ENCODE measurements at regions of chr2 and their contacts with region 1.

Region 1: DNA sequence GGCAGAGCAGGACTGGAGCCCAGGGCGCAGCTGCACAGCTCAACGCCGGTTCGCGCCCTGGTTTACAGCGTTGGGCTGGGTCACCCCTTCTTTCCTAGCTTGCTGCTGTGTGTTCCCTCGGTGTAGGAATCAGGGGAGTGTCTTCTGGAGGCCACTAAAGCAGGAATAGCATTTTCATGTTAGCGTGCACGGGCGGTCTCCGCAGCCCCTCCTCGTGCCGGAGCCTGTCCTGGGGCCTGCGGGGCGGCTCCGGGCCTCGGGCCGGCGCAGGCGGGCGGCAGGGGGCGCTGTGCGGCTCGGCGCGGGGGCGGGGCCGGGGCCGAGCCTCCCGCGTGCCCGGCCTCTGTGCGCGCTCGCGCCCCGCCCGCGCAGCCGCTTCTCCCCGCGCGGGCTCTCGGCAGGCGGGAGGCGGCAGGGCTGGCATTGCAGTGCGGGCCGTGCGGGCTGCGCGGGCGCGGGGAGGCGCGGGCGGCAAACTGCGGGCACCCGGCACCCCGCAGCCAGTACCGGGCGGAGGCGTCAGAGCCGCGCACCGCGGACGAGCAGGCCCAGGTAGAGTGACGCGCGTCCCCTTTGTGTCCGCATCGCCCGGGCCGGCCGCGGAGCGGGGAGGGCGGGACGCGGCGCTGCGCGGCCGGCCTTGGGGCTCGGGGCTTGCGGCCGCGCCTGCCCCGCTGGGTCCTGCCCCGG is at the start of gene RNF144A:
- DNase-seq: peak; percentile 69 to 89 (median 89)
- ATAC-seq: peak; percentile 85 to 89
- H3K4me3 ChIP-seq: peak within 1 kb of the TSS; percentile 69
- H3K27ac ChIP-seq: peak within 1 kb of the TSS; percentile 25
- H3K4me1 ChIP-seq: peaks cover 4% of the 10 kb centered on the region
- H3K27me3 ChIP-seq: no peaks in the 10 kb centered on the region
- total RNA-seq, gene RNF144A: 5.9 to 14.3 (median 10.5) TPM

Region 2: DNA sequence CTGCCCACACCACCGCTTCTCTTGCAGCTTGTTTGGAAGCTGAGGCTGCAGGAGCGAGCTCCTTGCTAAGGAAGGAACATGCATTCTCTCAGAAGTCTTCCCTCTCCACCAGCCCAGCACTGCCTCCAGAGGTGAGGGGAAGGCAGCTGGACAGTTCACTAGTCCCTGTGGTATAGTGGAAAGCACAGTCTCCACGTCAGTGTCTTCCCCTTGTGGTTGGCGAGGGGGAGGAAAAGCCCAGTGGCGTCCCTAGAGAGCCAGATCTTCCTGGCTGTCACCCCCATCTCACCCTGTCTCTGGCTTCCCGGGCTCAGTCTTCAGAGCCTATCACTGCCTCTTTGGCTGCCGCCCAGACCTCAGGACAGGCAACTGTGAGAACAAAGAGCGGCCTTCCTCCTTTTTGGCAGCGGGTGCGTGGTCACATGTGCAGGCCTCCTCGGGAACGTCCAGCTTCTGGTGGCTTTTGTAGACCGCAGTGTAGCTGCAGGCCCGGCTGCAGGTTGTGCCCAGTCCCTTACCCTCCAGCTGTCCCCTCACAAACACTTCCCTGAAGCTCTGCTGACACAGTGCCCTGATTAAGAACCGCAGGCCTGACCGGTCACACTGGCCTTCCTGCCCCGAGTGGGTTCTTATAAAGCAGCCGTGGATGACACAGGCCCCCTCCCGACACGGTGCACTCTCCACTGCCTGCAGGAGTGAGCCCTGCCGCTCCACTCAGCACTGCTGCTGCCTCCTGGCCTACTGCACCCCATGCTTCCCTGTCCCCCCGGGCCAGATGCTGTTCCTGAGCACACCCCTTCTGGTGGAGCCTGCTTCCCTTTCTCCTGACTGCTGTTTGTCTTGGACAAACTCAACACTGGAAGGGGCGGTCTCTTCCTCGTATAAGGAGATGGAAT is 90.9 kb after region 1 on chr2:
- intact Hi-C with region 1: loop called in 1 of 4 experiments (anchors 5 kb)
- DNase-seq: peak; percentile 88 to 96 (median 94)
- ATAC-seq: peak; percentile 87 to 89
- H3K4me3 ChIP-seq: no peak overlapping the region
- H3K27ac ChIP-seq: peak overlapping the region; percentile 27
- H3K4me1 ChIP-seq: peaks cover 18% of the 10 kb centered on the region
- H3K27me3 ChIP-seq: no peaks in the 10 kb centered on the region